Spleen (tissue), 13 donors: ENCODE measurements at regions of chr5 and their contacts with region 1.

Region 1: GRCh38 chr5:140073296-140073695 is 30.2 kb upstream of the NRG2 start:
- DNase-seq: no peak
- H3K4me3 ChIP-seq: no peak overlapping the region
- H3K27ac ChIP-seq: no peak overlapping the region
- H3K4me1 ChIP-seq: peaks cover 0 to 6% (median 0%) of the 10 kb centered on the region in 6 donors
- H3K27me3 ChIP-seq: peaks cover 0 to 41% (median 5%) of the 10 kb centered on the region in 7 donors
- CTCF ChIP-seq: peak; percentile 26 to 75 (median 71)
- POLR2A ChIP-seq: no peak

Region 2: DNA sequence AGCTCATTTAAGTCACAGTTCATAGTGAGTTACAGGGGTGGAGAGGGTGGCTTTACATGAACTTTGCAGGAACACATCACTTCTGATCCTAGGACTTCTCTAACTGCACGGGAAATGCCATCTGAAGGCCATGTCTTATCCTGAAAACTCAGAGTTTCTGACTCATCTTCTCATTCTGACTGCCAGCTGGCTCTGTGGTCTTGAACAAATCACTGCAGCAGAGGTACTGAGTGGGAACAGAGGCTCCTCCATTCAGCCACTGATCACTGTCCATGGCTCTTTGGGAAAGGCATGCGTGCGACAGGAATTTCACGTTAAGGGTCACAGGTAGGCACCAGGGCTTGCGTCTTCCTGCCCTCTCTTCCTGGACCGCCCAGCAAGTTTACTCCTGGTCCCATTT is 1083.6 kb before region 1 on chr5:
- intact Hi-C with region 1: no loop called
- DNase-seq: no peak
- H3K4me3 ChIP-seq: no peak overlapping the region
- H3K27ac ChIP-seq: no peak overlapping the region
- H3K4me1 ChIP-seq: peaks cover 0 to 6% (median 0%) of the 10 kb centered on the region in 6 donors
- H3K27me3 ChIP-seq: no peaks in the 10 kb centered on the region
- CTCF ChIP-seq: no peak
- POLR2A ChIP-seq: no peak

Region 3: GRCh38 chr5:139968547-139969261 is 104.6 kb before region 1 on chr5:
- intact Hi-C with region 1: no loop called
- DNase-seq: peak; percentile 95
- H3K4me3 ChIP-seq: peak overlapping the region in 1 of 8 donors; percentile 2
- H3K27ac ChIP-seq: no peak overlapping the region
- H3K4me1 ChIP-seq: peaks cover 7 to 19% (median 10%) of the 10 kb centered on the region in 6 donors
- H3K27me3 ChIP-seq: peaks cover 0 to 10% (median 0%) of the 10 kb centered on the region in 7 donors
- CTCF ChIP-seq: peak; percentile 96 to 100 (median 99)
- POLR2A ChIP-seq: no peak

Region 4: GRCh38 chr5:140145818-140146522 is 72.7 kb after region 1 on chr5:
- intact Hi-C with region 1: loop called (anchors 5 kb)
- DNase-seq: peak; percentile 92
- H3K4me3 ChIP-seq: peak overlapping the region; percentile 16 to 67 (median 30)
- H3K27ac ChIP-seq: no peak overlapping the region
- H3K4me1 ChIP-seq: peaks cover 10 to 41% (median 24%) of the 10 kb centered on the region in 6 donors
- H3K27me3 ChIP-seq: peaks cover 0 to 23% (median 8%) of the 10 kb centered on the region in 7 donors
- CTCF ChIP-seq: peak in 10 of 11 experiments; percentile 31 to 90 (median 82)
- POLR2A ChIP-seq: no peak

Region 5: DNA sequence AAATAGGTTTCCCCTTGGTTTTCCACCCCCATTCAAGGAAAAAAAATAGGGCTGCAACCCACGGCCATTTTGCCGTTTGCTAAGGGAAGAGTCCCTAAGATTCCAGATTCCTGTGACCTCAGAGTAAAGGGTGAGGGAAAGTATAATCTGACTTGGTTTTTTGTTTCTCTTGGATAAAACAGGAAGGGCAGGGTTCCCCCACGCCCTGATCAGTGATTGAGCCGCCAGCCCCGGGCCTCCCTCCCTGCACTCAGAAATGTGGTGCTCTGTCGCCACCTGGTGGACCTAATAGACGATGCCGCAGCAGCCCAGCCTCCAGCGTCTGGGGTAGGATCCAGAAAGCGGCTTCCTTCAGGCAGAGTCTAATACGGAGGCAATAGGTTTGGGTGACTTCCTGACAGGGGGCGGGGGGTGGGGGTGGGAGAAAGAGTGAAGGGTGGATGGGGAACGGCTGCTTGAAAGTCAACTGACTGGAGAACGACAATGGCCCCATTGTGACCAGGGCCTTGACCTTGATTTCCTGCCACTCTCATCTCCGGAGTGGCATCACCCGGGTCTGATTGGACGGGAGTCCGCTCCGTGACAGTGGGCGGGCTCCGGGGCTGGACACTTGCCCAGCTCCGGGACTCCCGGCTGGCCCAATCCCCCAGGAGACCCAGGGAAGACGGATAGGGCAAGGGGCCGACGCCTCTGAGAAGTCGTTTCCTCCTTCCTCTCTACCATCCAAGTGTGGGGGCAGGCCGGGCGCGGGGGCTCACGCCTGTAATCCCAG is 83.9 kb after region 1 on chr5:
- intact Hi-C with region 1: loop called (anchors 2 kb)
- DNase-seq: peak; percentile 96
- H3K4me3 ChIP-seq: peak overlapping the region in 5 of 8 donors; percentile 15 to 61 (median 28)
- H3K27ac ChIP-seq: peak overlapping the region in 6 of 8 donors; percentile 32 to 69 (median 44)
- H3K4me1 ChIP-seq: peaks cover 0 to 32% (median 13%) of the 10 kb centered on the region in 6 donors
- H3K27me3 ChIP-seq: no peaks in the 10 kb centered on the region
- CTCF ChIP-seq: peak; percentile 84 to 97 (median 93)
- POLR2A ChIP-seq: no peak

Region 6: GRCh38 chr5:140273401-140273877 is 200.1 kb after region 1 on chr5:
- intact Hi-C with region 1: no loop called
- DNase-seq: no peak
- H3K4me3 ChIP-seq: no peak overlapping the region
- H3K27ac ChIP-seq: peak overlapping the region in 5 of 8 donors; percentile 23 to 73 (median 65)
- H3K4me1 ChIP-seq: peaks cover 0 to 29% (median 12%) of the 10 kb centered on the region in 6 donors
- H3K27me3 ChIP-seq: no peaks in the 10 kb centered on the region
- CTCF ChIP-seq: no peak
- POLR2A ChIP-seq: no peak

Region 7: DNA sequence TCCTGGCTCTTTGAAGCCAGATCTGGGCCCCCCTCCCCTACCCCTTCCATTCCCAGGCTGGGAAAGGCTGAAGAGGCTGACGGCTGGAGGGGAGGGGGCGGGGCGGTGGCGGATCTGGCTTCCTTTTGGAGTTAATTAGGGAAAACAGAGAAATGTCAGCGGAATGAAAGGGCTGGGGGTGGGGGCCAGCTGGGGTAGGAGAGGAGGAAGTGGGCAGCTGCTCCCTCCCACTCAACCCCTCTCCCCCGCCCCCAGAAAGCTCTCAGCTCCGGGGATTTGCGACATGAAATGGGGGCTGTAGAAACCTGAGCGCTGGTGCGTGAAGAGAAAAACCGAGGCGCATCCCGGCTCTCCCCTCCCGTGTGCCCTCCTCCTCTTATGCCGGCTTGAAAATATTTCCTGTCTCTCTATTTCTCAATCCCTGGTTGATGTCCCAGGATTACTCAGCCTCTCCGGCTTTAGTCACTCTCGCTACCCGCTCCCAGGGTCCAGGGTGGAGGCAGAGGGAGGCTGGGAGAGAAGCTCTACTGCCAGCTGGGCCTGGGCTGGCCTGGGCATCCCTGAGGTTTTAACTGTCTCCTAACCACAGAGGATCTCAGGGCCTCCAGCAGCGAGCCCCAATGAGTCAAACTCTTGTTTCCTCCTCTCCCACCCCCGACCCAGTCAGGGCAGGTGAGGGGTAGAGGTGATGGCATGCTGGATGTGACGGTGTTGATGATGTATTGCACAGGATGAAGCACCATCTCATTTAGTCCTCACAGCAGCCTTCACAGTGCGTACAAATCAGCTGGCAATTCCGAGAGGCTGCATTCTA is 1435.7 kb after region 1 on chr5:
- intact Hi-C with region 1: no loop called
- DNase-seq: no peak
- H3K4me3 ChIP-seq: peak overlapping the region in 4 of 8 donors; percentile 6 to 62 (median 10)
- H3K27ac ChIP-seq: peak overlapping the region in 7 of 8 donors; percentile 65 to 85 (median 74)
- H3K4me1 ChIP-seq: peaks cover 10 to 74% (median 53%) of the 10 kb centered on the region in 6 donors
- H3K27me3 ChIP-seq: no peaks in the 10 kb centered on the region
- CTCF ChIP-seq: no peak
- POLR2A ChIP-seq: no peak